Caco-2 (cell line): ENCODE measurements at regions of chr9 and their contacts with region 1.

Region 1: DNA sequence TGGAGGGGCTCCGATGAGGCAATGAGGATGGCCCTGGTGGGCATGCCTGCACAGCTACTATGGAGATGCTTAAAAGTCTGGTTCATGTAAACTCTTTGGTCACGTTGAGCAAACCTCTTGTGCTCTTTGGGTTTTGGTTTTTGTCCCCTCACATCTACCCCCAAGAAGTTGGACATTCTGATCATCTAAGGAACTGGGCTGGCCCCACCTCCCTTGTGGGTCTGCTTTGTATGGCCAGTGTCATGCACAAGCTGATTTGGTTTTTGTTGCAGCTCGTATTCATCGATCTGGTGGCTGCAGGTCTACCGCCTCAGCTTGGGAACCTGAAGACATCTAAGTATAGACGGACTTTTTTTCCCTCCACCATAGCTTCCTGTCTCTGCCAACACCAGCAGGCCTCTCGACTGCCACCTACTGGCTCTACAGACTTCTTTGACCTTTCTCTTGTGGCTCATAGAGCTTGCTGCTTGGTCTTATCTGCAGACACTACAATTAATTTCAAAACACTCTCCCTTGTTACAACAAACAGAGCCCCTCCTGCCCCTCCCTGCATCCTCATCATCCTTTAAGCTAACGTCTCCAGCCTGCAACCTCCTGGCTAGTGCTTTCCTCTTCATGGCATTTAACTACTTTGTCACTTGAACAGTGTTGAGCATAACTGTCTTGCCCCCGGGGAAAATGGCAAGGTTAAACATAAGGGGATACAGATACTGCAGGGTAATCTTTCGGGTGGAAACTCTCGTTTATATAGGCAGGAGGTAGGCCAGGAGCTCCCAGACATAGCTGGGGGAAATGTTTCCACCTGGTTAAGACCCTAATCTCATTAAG is 34.5 kb downstream of the TSTD2 start:
- DNase-seq: peak; percentile 80 to 82
- H3K4me3 ChIP-seq: no peak overlapping the region
- H3K4me3 Mint-ChIP-seq: no peak overlapping the region
- H3K27ac Mint-ChIP-seq: no peak overlapping the region
- H3K4me1 ChIP-seq: 0 out of 2 replicates have a peak, but pooled peaks cover 3% of the 10 kb centered on the region
- H3K4me1 Mint-ChIP-seq: peaks cover 8% of the 10 kb centered on the region
- H3K27me3 ChIP-seq: no peaks in the 10 kb centered on the region
- H3K27me3 Mint-ChIP-seq: no peaks in the 10 kb centered on the region
- CTCF ChIP-seq: peak; percentile 83 to 93

Region 2: DNA sequence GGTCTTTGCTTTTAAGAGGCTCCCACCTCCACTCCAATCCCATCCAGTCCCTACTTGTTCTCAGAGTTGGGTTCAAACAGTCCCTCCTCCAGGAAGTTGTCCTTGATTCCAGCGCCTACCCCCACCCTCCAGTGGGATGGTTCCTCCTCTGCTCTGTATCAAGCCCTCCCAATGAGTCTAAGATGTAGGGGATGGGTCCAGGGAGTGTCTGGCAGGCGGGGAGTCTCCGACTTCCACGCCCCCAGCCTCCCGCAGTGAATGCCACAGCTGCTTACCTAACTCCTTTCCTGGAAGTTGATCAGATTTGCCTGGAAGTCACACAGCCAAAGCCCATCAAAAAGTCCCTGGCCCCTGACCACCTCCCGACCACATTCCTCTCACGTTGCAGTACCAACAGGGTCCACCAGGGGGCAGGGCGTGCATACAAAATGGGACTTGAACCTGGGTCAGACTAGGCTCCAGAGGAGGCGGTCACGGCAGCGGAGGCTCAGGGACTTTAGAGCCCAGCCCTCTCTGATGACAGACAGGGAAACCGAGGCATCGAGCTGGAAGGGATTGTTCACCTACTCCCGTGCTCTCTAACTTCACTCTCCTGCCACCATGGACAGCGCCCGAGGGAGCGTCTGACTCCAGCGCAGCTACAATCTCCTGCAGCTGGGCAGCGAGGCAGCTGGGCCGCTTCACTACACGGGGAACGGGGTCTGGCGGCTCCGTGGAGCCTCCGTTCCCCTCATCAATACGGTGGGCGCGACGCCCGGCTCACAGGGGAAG is 211.8 kb before region 1 on chr9:
- CTCF ChIA-PET with region 1: interaction called, 9 read pairs
- POLR2A ChIA-PET with region 1: no interaction called
- intact Hi-C with region 1: loop called (anchors 5 kb)
- DNase-seq: peak; percentile 79 to 81
- H3K4me3 ChIP-seq: no peak overlapping the region
- H3K4me3 Mint-ChIP-seq: no peak overlapping the region
- H3K27ac Mint-ChIP-seq: peak overlapping the region; percentile 89
- H3K4me1 ChIP-seq: peaks cover 70% of the 10 kb centered on the region
- H3K4me1 Mint-ChIP-seq: peaks cover 55% of the 10 kb centered on the region
- H3K27me3 ChIP-seq: no peaks in the 10 kb centered on the region
- H3K27me3 Mint-ChIP-seq: no peaks in the 10 kb centered on the region
- CTCF ChIP-seq: peak; percentile 91 to 97

Region 3: GRCh38 chr9:97468658-97469448 is 129.8 kb before region 1 on chr9:
- CTCF ChIA-PET with region 1: interaction called, 31 read pairs
- POLR2A ChIA-PET with region 1: no interaction called
- intact Hi-C with region 1: loop called (anchors 1 kb)
- DNase-seq: peak; percentile 59 to 72
- H3K4me3 ChIP-seq: no peak overlapping the region
- H3K4me3 Mint-ChIP-seq: no peak overlapping the region
- H3K27ac Mint-ChIP-seq: no peak overlapping the region
- H3K4me1 ChIP-seq: no peaks in the 10 kb centered on the region
- H3K4me1 Mint-ChIP-seq: no peaks in the 10 kb centered on the region
- H3K27me3 ChIP-seq: no peaks in the 10 kb centered on the region
- H3K27me3 Mint-ChIP-seq: no peaks in the 10 kb centered on the region
- CTCF ChIP-seq: peak; percentile 67 to 81

Region 4: DNA sequence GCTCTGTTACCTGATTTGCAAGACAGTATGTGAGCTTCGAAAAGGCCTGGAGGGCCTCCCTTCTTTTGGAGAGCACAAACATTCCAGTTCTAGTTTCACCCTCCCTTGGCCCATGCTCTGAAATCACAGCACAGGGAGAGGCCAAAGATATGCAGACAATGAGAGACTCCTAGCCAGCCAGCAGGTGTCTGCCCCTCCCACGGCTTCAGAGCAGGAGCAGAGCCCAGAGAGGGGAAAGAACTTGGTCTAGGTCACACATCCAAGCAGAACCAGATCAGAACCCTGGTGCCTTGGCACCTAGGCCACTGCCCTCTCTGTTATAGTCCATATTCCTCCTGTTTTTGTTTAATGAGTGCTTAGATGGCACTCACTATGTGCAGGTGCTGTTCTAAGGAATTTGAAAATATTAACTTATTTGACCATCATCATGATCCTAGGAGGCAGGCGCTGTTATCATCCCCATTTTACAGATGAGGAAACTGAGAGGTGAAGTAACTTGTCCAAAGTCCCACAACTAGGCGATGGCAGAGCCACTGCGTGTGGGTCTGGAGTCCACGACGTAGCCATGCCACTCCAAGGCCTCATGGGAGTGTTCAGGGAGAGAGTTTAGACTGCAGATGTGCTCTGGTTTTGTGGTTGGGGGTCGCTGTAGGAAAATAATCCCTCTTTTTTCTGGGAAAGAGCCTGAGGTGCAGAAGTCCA is 70.0 kb before region 1 on chr9:
- CTCF ChIA-PET with region 1: no interaction called
- POLR2A ChIA-PET with region 1: no interaction called
- intact Hi-C with region 1: loop called (anchors 1 kb)
- DNase-seq: peak; percentile 50 to 62
- H3K4me3 ChIP-seq: no peak overlapping the region
- H3K4me3 Mint-ChIP-seq: no peak overlapping the region
- H3K27ac Mint-ChIP-seq: peak overlapping the region; percentile 46
- H3K4me1 ChIP-seq: peaks cover 12% of the 10 kb centered on the region; the same call in 1 of the 2 replicates
- H3K4me1 Mint-ChIP-seq: peaks cover 10% of the 10 kb centered on the region
- H3K27me3 ChIP-seq: no peaks in the 10 kb centered on the region
- H3K27me3 Mint-ChIP-seq: no peaks in the 10 kb centered on the region
- CTCF ChIP-seq: no peak

Region 5: GRCh38 chr9:97578856-97579255 is 19.8 kb before region 1 on chr9:
- CTCF ChIA-PET with region 1: no interaction called
- POLR2A ChIA-PET with region 1: no interaction called
- intact Hi-C with region 1: no loop called
- DNase-seq: no peak
- H3K4me3 ChIP-seq: no peak overlapping the region
- H3K4me3 Mint-ChIP-seq: no peak overlapping the region
- H3K27ac Mint-ChIP-seq: no peak overlapping the region
- H3K4me1 ChIP-seq: no peaks in the 10 kb centered on the region
- H3K4me1 Mint-ChIP-seq: no peaks in the 10 kb centered on the region
- H3K27me3 ChIP-seq: no peaks in the 10 kb centered on the region
- H3K27me3 Mint-ChIP-seq: no peaks in the 10 kb centered on the region
- CTCF ChIP-seq: no peak

Region 6: DNA sequence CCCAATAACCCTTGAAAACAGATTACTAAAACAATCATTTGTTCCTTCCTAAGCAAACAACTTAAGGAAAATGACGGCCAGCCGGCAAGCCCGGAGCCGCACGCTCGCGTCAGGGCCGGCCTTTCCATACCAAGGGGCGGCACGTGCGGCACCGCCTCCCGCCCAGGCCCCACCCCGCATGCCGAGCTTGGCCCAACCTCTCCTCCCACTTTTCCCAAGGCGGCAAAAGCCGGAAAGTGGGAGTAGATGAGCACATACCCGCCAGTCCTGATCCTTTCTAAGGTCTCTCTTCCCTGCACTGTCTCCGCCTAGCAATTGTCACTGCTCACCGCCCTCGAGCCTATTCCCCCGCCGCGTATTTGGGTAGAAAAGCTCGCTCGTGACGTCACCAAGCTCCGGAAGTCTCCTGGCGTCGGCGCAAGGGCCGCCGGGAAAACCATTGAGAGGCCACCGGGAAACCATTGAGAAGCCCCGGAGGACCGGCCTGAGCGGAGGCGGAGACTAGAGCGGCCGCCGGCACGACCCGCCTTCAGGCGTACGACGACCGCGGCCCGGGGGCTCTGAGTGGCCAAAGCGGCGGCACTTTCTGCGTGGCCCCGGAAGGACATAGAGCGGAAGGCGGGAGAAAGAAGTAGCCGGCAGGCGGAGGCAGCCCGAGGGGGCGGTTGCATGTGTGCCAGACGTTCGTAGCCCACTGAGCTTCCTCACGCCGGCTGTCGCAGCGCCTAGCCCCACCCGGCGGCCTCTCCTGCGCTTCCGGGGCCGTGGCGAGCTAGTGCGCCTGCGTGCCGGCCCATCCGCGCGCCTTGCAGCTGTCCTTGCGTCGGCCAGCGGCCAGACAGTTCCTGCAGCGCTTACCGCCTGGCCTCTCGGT is 34.5 kb after region 1 on chr9 and contains the starts of genes NCBP1 and TSTD2:
- CTCF ChIA-PET with region 1: interaction called, 12 read pairs
- POLR2A ChIA-PET with region 1: no interaction called
- intact Hi-C with region 1: no loop called
- DNase-seq: peak; percentile 98
- H3K4me3 ChIP-seq: peak within 1 kb of the TSS; percentile 99
- H3K4me3 Mint-ChIP-seq: peak within 1 kb of the TSS; percentile 95
- H3K27ac Mint-ChIP-seq: peak within 1 kb of the TSS; percentile 100
- H3K4me1 ChIP-seq: peaks cover 5% of the 10 kb centered on the region
- H3K4me1 Mint-ChIP-seq: peaks cover 15% of the 10 kb centered on the region
- H3K27me3 ChIP-seq: no peaks in the 10 kb centered on the region
- H3K27me3 Mint-ChIP-seq: no peaks in the 10 kb centered on the region
- CTCF ChIP-seq: no peak
- total RNA-seq, gene NCBP1: 59.7 and 66.9 TPM in 2 replicates
- total RNA-seq, gene TSTD2: 20.7 and 21.4 TPM in 2 replicates

Region 7: GRCh38 chr9:97830884-97831829 is 232.5 kb after region 1 on chr9:
- CTCF ChIA-PET with region 1: no interaction called
- POLR2A ChIA-PET with region 1: no interaction called
- intact Hi-C with region 1: no loop called
- DNase-seq: peak; percentile 58 to 63
- H3K4me3 ChIP-seq: peak overlapping the region; percentile 23
- H3K4me3 Mint-ChIP-seq: peak overlapping the region; percentile 36
- H3K27ac Mint-ChIP-seq: peak overlapping the region; percentile 5
- H3K4me1 ChIP-seq: peaks cover 18% of the 10 kb centered on the region
- H3K4me1 Mint-ChIP-seq: peaks cover 18% of the 10 kb centered on the region
- H3K27me3 ChIP-seq: no peaks in the 10 kb centered on the region
- H3K27me3 Mint-ChIP-seq: no peaks in the 10 kb centered on the region
- CTCF ChIP-seq: no peak